Activated T-helper 2 cell treated with anti-CD3 and anti-CD28 coated beads, Interferon-gamma antibody, Interleukin-2, Interleukin-4, amounts not matched to agents 10 μg/mL and 5 μg/mL and 100 μg/mL, durations not matched to agents 14 hours and 24 hours and 36 hours (primary cell): ENCODE measurements at regions of chr12 and their contacts with region 1.

Region 1: DNA sequence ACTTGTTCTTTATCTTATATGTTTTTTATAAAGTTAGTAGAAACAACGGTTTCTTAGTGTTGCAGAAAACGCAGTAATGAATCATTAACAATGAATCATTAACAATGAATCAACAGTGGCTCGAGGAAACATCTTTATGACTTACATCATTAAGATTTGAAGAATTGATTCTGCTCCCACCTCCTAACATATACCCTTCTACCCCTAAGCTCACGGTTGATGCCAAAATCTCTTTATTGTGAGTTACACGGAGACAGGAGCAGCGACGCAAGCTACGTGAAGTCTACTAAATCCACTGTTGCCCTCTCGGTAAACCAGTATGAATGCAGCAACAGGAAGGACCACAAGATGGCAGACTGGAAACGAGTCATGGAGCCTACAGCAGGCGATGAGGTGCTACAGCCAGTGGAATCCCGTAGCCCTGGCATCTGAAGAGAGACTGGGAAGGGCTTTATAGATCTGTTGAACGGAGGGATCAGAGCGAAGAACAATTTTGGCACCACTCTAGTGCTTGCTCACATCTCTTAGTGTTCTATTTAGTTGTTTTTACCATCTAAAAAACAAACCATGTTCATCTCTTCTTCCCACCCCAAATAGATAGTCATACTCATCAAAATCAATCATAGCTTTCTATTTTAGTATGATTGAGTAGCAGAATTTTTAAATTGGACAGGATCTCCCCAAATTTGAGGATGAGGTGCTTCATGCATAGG is 332.7 kb downstream of the DUSP6 start:
- DNase-seq: peak; percentile 75
- H3K4me3 Mint-ChIP-seq: no peak overlapping the region
- H3K27ac Mint-ChIP-seq: no peak overlapping the region
- H3K4me1 Mint-ChIP-seq: peaks cover 27% of the 10 kb centered on the region
- H3K27me3 Mint-ChIP-seq: peaks cover 1% of the 10 kb centered on the region

Region 2: GRCh38 chr12:88092771-88093170 is 926.8 kb before region 1 on chr12:
- intact Hi-C with region 1: no loop called
- DNase-seq: no peak
- H3K4me3 Mint-ChIP-seq: no peak overlapping the region
- H3K27ac Mint-ChIP-seq: no peak overlapping the region
- H3K4me1 Mint-ChIP-seq: no peaks in the 10 kb centered on the region
- H3K27me3 Mint-ChIP-seq: no peaks in the 10 kb centered on the region

Region 3: DNA sequence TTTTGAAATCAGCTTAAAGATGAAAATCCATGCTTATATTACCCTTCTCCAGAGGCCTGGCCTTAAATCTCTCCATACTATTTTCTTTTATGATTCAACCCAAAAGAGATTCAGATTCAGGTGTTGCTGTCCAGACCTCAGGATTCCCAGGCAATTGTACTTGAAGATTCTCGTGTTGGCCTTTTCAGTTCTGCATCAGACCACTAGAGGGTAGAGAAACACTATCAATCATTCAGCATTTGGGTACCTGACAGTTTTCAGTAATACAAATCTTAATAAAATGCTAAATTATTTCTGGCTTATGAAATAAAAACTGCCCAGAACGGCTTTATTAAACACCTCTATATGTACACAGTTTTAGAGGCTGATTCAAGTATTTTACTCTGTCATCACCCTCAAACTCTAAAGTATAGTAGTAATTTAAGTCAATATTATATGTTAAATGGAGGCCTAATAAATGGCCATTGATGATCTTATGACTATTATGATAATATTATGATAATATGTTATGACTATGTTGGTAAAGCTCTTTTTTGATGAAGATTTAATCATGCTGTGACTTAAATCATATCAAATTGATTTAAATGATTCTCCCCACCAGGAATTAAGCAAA is 31.6 kb after region 1 on chr12:
- intact Hi-C with region 1: loop called (anchors 5 kb)
- DNase-seq: no peak
- H3K4me3 Mint-ChIP-seq: no peak overlapping the region
- H3K27ac Mint-ChIP-seq: peak overlapping the region; percentile 42
- H3K4me1 Mint-ChIP-seq: peaks cover 43% of the 10 kb centered on the region
- H3K27me3 Mint-ChIP-seq: no peaks in the 10 kb centered on the region

Region 4: DNA sequence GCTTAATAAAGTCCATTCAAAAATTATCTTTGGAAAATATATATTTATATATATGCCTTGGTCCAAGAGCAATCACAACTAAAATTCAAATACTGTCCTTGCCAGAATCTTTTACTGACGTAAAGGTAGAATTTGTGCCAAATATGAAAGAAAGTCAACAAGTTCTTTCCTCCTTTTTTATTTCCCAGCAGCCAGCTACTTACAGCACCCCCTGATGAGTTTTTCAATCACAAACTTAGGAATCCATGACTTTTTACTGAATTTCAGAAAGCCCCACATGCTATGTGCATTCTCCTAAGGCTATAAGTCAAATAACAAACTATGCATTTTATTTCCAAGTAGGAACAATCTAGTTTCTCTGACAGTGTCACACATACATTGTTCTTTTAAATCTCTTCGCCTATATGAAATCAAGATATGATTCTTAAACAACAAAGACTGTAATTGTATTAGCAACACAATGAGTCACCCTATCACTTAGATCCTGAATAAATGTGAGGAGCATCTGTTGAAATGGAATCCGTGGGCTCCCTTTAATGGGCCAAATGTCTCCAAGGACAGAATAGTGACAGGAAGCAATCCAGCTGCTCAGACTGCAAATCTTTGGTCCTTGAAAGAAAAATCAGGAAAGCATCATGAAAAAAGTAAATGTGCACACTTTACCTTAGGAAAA is 61.4 kb after region 1 on chr12:
- intact Hi-C with region 1: no loop called
- DNase-seq: no peak
- H3K4me3 Mint-ChIP-seq: no peak overlapping the region
- H3K27ac Mint-ChIP-seq: no peak overlapping the region
- H3K4me1 Mint-ChIP-seq: peaks cover 14% of the 10 kb centered on the region
- H3K27me3 Mint-ChIP-seq: no peaks in the 10 kb centered on the region

Region 5: DNA sequence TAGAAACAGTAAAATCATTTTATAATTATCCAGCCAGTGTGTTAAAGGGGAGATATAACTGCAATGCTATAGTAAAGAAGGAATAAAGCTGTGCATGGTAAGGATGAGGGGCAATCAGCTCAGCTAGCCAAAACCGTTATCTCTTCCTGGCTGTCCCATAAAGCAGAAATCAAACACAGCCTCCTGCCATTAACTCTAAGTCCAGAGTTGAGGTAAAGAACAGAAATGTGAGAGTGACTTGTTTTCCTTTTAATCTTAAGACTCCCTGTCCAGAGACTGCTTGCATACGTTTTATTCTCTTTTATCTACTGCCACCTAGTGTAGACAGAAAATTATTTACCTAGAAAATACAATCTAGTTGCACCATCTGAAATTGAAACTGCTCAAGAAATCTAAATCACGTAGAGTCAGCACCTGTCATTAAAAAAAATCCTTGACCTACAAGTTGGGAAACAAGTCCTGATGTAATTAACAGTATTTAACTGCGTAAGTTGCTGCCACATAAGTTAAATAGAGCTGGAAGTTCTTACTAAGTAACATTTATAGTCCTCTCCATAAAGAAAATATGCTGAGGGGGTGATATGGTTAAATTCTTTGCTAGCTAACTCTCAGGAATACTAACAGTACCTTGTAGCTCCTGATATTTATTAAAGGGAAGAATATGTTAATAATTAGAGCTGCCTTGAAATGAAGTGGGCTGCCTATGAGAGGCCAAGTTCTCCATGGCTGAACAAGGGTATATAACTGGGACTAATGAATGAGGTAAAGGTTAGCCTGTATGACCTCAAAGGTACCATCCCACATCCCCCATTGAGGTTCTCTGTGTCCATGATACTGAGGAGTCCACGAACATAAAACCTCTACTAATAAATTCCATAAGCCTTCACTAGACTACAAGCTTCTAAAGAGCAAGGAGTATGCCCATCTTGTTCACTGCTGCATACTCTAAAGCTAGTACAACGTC is 442.4 kb after region 1 on chr12:
- intact Hi-C with region 1: loop called (anchors 1 kb)
- DNase-seq: no peak
- H3K4me3 Mint-ChIP-seq: peak overlapping the region; percentile 60
- H3K27ac Mint-ChIP-seq: peak overlapping the region; percentile 66
- H3K4me1 Mint-ChIP-seq: peaks cover 55% of the 10 kb centered on the region
- H3K27me3 Mint-ChIP-seq: no peaks in the 10 kb centered on the region

Region 6: DNA sequence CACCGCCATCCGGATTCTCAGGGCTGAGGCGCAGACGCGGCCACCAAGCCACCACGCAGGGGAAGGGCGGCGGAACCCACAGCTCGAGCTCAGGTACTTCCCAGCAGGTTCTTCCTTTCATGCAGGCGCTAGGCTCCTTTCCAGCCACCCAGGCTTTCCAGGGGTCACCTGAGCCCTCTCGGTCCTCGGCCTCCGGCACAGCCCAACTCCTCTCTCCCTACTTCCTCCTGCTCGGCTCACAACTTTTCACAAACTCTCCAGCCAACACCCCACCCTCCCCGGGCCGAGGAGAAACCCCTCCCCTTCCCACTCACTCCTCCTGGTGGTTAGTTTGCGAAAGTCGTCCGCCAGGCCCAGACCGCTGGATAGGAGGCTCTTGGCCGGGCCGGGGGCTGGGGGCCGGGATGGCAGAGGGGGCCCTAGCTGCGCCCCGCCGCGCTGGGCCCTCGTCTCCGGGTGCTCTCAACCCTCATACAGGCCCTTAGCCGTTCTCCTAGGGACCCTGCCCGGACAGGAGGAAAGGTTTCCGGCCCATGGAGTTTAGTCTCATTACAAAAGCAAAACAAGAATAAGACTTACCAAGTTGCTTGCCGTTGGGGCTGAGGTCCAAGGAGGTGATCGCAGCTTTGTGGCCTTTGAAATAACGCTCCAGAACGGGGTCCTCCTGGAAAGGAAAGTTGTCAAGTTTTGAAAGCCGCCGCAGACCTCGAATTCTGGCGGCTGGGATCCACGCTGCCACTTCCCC is 505.1 kb after region 1 on chr12 and contains the start of gene GALNT4:
- intact Hi-C with region 1: loop called (anchors 1 kb)
- DNase-seq: peak; percentile 75
- H3K4me3 Mint-ChIP-seq: peak within 1 kb of the TSS; percentile 99
- H3K27ac Mint-ChIP-seq: peak within 1 kb of the TSS; percentile 99
- H3K4me1 Mint-ChIP-seq: peaks cover 51% of the 10 kb centered on the region
- H3K27me3 Mint-ChIP-seq: no peaks in the 10 kb centered on the region
- total RNA-seq, gene GALNT4: 8.8 and 9.1 TPM in 2 replicates

Region 7: GRCh38 chr12:89529738-89530137 is 510.2 kb after region 1 on chr12:
- intact Hi-C with region 1: loop called (anchors 1 kb)
- DNase-seq: no peak
- H3K4me3 Mint-ChIP-seq: no peak overlapping the region
- H3K27ac Mint-ChIP-seq: no peak overlapping the region
- H3K4me1 Mint-ChIP-seq: peaks cover 34% of the 10 kb centered on the region
- H3K27me3 Mint-ChIP-seq: no peaks in the 10 kb centered on the region